PC-3 (cell line): ENCODE measurements at regions of chr6 and their contacts with region 1.

Region 1: GRCh38 chr6:70811788-70812187 is 144.1 kb downstream of the SMAP1 start:
- DNase-seq: peak; percentile 81
- ATAC-seq: peak; percentile 96
- H3K4me3 ChIP-seq: no peak overlapping the region
- H3K27ac ChIP-seq: peak overlapping the region; percentile 46
- H3K4me1 ChIP-seq: peaks cover 11% of the 10 kb centered on the region
- H3K27me3 ChIP-seq: no peaks in the 10 kb centered on the region
- CTCF ChIP-seq: no peak

Region 2: GRCh38 chr6:70700922-70701876 is 110.6 kb before region 1 on chr6:
- CTCF ChIA-PET with region 1: no interaction called
- POLR2A ChIA-PET with region 1: no interaction called
- intact Hi-C with region 1: no loop called
- DNase-seq: no peak
- ATAC-seq: no peak
- H3K4me3 ChIP-seq: no peak overlapping the region
- H3K27ac ChIP-seq: no peak overlapping the region
- H3K4me1 ChIP-seq: no peaks in the 10 kb centered on the region
- H3K27me3 ChIP-seq: no peaks in the 10 kb centered on the region
- CTCF ChIP-seq: no peak

Region 3: GRCh38 chr6:70849348-70850069 is 37.7 kb after region 1 on chr6:
- CTCF ChIA-PET with region 1: no interaction called
- POLR2A ChIA-PET with region 1: no interaction called
- intact Hi-C with region 1: loop called (anchors 1 kb)
- DNase-seq: peak; percentile 58
- ATAC-seq: peak; percentile 91
- H3K4me3 ChIP-seq: no peak overlapping the region
- H3K27ac ChIP-seq: peak overlapping the region; percentile 74
- H3K4me1 ChIP-seq: peaks cover 15% of the 10 kb centered on the region
- H3K27me3 ChIP-seq: no peaks in the 10 kb centered on the region
- CTCF ChIP-seq: no peak